Activated CD8-positive, alpha-beta memory T cell treated with anti-CD3 and anti-CD28 coated beads, Interleukin-2, amount 10 ng/mL, durations not matched to agents 7 days and 5 days (primary cell): ENCODE measurements at regions of chr2 and their contacts with region 1.

Region 1: GRCh38 chr2:96618604-96619283 is 19.4 kb downstream of the KANSL3 start:
- DNase-seq: no peak
- ATAC-seq: no peak
- H3K4me3 Mint-ChIP-seq: no peak overlapping the region
- H3K27ac Mint-ChIP-seq: peak overlapping the region; percentile 58
- H3K4me1 Mint-ChIP-seq: peaks cover 45% of the 10 kb centered on the region
- H3K27me3 Mint-ChIP-seq: no peaks in the 10 kb centered on the region

Region 2: DNA sequence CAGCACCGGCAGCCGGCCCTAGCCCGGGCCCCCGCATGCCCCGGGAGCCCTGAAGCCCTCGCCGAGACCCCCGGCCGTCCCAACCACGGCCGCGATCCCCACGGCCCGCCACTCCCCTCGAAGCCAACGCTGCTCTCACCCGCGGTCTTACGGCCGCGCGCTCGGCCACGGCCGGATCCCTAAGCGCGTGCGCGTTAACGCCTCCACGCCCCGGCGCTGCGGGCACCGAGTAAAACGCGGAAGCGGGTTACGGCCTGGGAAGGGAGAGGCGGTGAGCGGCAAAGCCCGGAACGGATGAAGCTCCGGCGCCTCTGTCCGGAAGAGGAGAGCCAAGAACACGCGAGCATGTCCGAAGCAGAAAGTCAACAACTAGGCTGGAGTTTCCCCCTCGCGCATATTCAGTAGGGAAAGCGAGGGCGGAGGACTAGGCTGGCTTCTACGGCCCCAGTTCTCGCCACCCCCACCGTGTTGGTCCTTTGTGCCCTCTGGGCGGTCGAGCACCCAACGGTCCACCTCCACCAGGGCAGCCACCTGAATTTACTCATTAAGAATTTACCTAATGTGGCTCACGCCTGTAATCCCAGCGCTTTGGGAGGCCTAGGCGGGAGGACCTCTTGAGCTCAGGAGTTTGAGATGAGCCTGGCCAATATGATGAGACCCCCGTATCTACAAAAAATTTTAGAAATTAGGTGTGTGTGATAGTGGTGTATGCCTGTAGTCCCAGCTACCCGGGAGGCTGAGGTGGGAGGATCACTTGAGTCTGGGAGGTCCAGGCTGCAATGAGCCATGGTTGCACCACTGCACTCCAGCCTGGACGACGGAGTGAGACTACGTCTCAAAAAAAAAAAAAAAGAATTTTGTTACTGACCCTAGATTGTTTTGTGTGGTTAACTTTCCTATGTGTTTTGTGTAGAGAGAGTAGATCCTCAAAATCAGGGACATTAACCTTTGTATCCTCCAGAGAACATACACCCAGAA is 19.7 kb after region 1 on chr2 and contains the start of gene KANSL3:
- CTCF ChIA-PET with region 1: interaction called, 13 read pairs
- DNase-seq: peak; percentile 93
- ATAC-seq: peak; percentile 84
- H3K4me3 Mint-ChIP-seq: peak within 1 kb of the TSS; percentile 80
- H3K27ac Mint-ChIP-seq: peak within 1 kb of the TSS; percentile 94
- H3K4me1 Mint-ChIP-seq: peaks cover 41% of the 10 kb centered on the region
- H3K27me3 Mint-ChIP-seq: peaks cover 11% of the 10 kb centered on the region
- total RNA-seq, gene KANSL3: 74.6 to 84.0 TPM